HAP-1 (cell line): ENCODE measurements at regions of chr15 and their contacts with region 1.

Region 1: DNA sequence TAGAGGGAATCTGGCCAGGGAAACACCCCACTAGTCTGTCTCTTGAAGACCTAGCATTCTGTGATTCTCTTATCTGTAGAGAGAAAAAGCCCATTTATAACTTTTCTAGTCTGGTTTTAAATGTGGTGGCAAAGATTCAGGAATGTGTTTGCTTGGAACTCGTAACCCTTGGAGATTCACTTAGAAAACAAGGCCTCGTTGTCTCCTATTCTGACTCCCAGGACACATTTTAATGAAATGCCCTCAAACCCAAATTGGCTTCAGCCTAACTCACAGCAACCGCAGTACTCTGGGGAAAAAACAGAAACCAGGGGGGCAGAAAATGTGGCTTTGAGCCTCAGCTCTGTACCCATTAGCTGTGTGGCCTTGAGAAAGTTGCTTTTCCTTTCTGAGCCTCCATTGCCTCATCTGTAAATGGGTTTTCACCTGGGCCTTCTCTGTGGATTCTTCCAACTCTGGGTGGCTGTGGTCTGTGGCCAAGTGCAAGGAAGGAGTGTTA is 36.5 kb downstream of the RPLP1 start:
- DNase-seq: no peak
- H3K4me3 ChIP-seq: no peak overlapping the region
- H3K4me1 ChIP-seq: no peaks in the 10 kb centered on the region
- H3K27me3 ChIP-seq: no peaks in the 10 kb centered on the region

Region 2: DNA sequence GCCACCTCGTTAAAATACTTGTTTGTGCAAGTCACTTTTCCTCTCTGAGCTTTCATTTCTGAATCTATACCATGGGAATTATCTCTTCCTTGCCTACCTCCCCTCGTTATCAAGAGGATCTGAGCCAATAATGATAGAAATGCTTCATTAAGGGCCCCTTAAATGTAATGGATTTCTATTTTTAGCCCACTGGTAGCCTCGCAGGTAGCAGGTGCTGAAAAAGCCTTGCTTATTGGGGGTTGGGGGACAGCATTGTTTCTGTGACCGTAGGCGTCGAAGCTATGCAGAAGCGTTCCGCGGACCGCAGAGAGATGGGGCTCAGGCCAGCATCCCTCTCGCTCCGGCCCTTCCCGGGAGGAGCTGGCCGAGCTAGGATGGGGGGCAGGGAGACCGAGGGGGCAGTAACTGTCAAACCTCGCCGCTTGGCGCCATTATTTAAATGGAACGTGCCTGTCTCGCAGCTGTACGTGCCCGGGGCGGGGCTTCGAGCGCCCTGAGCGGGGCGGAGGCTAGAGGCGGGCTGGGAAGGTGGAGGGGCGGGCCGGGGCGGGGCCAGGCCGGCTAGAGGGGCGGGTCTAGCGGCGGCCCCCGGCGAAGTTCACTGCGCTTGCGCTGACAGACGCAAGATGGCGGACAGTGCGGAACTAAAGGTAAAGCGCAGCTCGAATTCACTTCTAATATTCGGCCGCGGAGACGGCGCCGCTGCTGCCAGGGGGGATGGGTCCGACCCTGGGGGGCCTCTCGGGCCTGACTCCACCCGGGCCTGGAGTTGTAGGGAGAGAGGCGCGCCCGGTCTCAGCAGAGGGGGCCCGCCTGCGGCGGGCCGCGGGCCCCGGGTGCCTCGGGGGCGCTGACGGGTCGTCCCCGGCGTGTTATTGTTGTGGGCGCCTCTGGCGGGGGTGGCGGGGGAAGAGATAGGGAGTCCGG is 1435.2 kb before region 1 on chr15 and contains the start of gene PIAS1:
- in situ Hi-C with region 1: no loop called
- DNase-seq: peak; percentile 99 to 100
- H3K4me3 ChIP-seq: peak within 1 kb of the TSS; percentile 83
- H3K4me1 ChIP-seq: peaks cover 41% of the 10 kb centered on the region
- H3K27me3 ChIP-seq: no peaks in the 10 kb centered on the region

Region 3: GRCh38 chr15:69540622-69541021 is 51.5 kb after region 1 on chr15:
- in situ Hi-C with region 1: loop called (anchors 10 kb)
- DNase-seq: no peak
- H3K4me3 ChIP-seq: no peak overlapping the region
- H3K4me1 ChIP-seq: peaks cover 25% of the 10 kb centered on the region
- H3K27me3 ChIP-seq: no peaks in the 10 kb centered on the region

Region 4: GRCh38 chr15:69729161-69729748 is 240.1 kb after region 1 on chr15:
- in situ Hi-C with region 1: loop called (anchors 10 kb)
- DNase-seq: peak; percentile 25 to 86
- H3K4me3 ChIP-seq: no peak overlapping the region
- H3K4me1 ChIP-seq: no peaks in the 10 kb centered on the region
- H3K27me3 ChIP-seq: no peaks in the 10 kb centered on the region

Region 5: DNA sequence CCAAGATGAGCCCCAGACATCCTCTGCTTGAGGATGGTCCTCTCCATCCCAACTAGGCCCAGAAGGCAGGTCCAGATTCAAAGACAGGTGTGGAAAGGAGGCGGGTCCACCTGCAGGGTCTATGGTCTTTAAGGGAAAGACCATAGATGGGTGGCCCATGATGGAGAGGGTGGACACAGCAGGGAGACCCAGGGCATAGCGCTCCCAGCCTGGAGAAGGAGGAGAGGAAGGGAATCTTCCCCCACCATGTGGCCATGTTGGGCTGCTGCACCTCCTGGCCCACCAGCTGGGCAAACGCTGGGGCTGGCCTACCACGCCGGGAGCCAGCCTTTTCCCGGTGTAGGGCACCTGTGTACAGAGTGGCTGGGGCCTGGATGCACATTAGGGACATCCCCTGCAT is 873.8 kb after region 1 on chr15:
- in situ Hi-C with region 1: no loop called
- DNase-seq: peak in 1 of 2 experiments; percentile 62
- H3K4me3 ChIP-seq: no peak overlapping the region
- H3K4me1 ChIP-seq: no peaks in the 10 kb centered on the region; the same call in 1 of the 2 replicates
- H3K27me3 ChIP-seq: no peaks in the 10 kb centered on the region; the same call in 1 of the 2 replicates